ENCODE measurements at regions of chr19 and their contacts with region 1.

Region 1: GRCh38 chr19:3336680-3337523 is 29.5 kb upstream of the NFIC start:
- DNase-seq: peak; percentile 92
- ATAC-seq: peak; percentile 95

Region 2: GRCh38 chr19:3360421-3361383 is 23.8 kb after region 1 on chr19:
- intact Hi-C with region 1: loop called (anchors 2 kb)
- DNase-seq: peak; percentile 90
- ATAC-seq: peak; percentile 70

Region 3: GRCh38 chr19:3429581-3430080 is 92.7 kb after region 1 on chr19:
- intact Hi-C with region 1: loop called (anchors 2 kb)
- DNase-seq: peak; percentile 94
- ATAC-seq: peak; percentile 88

Region 4: GRCh38 chr19:3593156-3593555 is 256.3 kb after region 1 on chr19:
- intact Hi-C with region 1: no loop called
- DNase-seq: no peak
- ATAC-seq: no peak

Measured in Right ventricle myocardium inferior (tissue), 1 donor.